Cardiac septum (tissue), 1 donor: ENCODE measurements at regions of chr19 and their contacts with region 1.

Region 1: DNA sequence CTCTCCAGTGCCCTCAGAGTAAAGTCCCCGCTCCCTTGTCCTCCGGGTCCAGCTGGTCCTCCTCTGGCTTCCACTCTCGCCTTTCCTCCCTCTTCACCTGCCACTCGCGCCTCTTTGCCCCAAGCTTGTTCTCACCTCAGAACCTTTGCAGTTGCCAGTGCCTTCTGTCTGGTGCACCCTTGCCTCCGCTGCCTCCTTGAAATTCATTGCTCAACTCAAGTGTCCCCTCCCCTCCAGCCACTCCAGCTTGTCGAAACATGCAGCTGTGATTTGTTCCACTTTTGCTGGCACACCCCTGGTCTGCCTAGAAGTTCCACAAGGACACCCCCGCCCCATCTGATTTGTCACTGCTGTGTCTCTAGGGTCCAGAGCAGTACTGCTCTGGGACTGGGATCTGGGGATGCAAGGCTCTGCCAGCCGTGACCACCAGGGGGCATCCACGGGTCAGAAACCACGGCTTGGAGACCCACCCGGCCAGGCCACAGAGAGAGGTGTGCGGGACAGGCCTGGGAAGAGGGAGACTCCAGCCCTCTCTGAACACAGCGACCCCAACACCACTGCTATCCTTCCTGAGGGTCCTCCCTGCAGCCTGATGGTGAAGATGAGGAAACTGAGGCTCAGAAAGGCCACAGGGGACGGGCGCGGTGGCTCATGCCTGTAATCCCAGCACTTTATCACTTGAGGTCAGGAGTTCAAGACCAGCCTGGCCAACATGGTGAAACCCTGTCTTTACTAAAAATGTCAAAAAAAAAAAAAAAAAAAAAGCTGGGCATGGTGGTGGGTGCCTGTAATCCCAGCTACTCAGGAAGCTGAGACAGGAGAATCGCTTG is 49.9 kb downstream of the AP1M1 start:
- DNase-seq: peak; percentile 95

Region 2: DNA sequence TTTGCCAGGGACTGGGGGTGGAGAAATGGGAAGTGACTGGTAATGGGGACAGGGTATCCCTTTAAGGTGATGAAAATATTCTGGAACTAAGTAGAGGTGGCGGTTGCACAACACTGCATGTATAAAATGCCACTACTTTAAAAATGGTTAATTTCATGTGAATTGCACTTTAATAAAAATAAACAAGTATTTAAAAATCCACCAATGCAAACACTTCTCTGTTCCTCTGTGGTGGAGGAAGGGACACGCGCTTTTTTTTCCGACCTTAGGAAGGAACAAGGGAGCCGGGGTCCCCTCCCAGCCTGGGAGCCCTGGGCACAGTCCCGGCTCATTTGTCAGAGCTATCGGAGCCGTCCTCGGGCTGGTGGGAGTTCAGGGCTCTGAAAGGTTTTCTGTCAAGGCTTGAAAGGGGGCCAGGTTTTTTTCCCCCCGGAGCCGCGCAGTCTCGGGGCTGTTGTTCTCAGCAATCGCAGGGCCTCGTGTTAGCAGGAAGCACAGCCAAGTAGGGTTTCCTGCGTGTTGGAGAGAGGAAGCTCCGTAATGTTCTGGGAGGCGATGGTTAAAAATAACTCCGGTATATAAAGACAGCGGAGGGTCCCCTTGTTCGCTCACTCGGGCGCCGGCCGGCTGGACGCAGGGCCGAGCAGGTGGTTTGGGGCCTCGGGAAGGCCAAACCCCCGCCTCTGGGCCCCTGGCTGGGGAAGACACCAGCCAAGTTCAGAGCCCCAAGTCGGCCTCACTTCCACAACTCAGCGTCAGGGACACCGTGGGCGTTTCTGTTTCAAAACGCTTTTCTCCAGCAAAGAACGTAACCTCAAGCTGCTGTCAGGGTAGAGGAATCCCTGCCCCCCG is 35.9 kb after region 1 on chr19:
- intact Hi-C with region 1: loop called (anchors 5 kb)
- DNase-seq: peak; percentile 92

Region 3: GRCh38 chr19:16330368-16330801 is 82.8 kb after region 1 on chr19:
- intact Hi-C with region 1: loop called (anchors 2 kb)
- DNase-seq: peak; percentile 93

Region 4: GRCh38 chr19:16371540-16371986 is 124.0 kb after region 1 on chr19:
- intact Hi-C with region 1: no loop called
- DNase-seq: peak; percentile 90

Region 5: DNA sequence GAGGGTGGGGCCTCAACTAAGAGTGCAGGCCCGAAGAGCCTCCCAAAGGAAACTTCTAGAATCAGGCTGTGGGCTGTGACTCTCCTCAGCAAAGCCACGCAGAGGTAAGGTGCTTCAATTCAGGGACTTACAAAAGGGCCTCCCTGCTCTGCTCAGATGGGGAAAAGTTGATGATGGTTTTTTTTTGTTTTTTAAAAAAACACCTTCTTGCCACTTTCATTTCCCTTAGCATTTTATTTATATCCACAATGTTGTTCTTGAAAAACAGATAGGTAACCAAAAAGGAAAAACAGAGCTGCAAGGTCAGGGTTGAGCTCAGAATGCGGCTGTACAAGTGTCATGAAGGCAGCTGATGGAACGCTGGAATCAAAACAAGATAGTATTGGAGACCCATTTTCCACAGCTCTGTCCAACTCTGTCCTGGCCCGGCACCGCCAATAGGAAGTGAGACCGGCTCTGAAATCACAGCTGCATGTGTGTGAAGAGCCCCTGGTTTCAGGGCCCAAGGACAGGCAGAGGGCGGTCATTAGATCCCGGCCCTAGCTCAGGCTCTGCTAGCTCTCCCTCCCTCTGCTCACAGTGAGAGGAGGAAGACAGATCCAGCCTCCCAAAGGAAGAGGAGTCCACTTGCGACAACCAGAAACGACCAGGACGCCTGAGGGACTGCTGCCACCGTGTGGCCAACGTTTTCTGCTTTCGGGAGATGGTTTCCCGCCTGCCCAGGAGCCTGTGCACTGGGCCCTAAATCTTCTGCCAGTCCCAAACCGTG is 135.4 kb after region 1 on chr19:
- intact Hi-C with region 1: loop called (anchors 1 kb)
- DNase-seq: peak; percentile 94